ENCODE measurements at regions of chr15 and their contacts with region 1.

Region 1: DNA sequence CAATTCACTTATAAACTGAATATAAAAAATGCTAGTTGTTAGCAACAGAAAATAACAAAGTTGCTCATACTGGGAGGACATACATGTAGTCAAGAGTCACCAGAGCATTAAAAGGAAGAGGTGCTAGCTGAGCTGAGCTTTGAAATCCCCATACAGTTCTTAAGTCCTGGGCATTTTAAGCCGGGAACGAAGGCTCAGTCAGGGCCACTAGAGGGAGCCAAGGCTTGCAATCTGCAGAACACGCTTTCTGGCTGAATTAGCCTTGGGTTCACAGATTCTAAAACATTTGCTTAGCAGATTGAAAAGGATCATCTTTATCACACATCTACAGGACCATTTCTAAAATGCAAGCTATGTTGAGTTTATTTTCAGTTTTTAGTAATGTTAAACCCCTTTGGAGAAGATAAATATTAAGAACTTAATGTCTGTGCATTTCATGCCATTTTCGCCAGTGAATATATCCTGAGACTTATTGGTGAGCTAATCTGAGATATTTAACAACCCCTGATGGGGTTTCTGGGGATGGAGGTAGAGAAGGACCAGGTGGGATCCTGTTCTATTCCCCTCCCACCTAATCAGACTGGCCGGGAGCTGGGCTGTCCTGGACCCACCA is 26.3 kb upstream of the MNS1 start:
- DNase-seq: no peak
- H3K4me3 ChIP-seq: no peak overlapping the region
- H3K27ac ChIP-seq: no peak overlapping the region
- H3K4me1 ChIP-seq: no peaks in the 10 kb centered on the region
- H3K27me3 ChIP-seq: no peaks in the 10 kb centered on the region
- CTCF ChIP-seq: peak; percentile 76 to 93 (median 77)
- EP300 ChIP-seq: no peak
- POLR2A ChIP-seq: no peak

Region 2: GRCh38 chr15:56327701-56328452 is 163.3 kb before region 1 on chr15:
- intact Hi-C with region 1: no loop called
- DNase-seq: no peak
- H3K4me3 ChIP-seq: no peak overlapping the region
- H3K27ac ChIP-seq: no peak overlapping the region
- H3K4me1 ChIP-seq: no peaks in the 10 kb centered on the region
- H3K27me3 ChIP-seq: no peaks in the 10 kb centered on the region
- CTCF ChIP-seq: no peak
- EP300 ChIP-seq: no peak
- POLR2A ChIP-seq: no peak

Region 3: GRCh38 chr15:56805466-56806146 is 314.4 kb after region 1 on chr15:
- intact Hi-C with region 1: loop called (anchors 10 kb)
- DNase-seq: no peak
- H3K4me3 ChIP-seq: peak overlapping the region; percentile 5 to 26 (median 21)
- H3K27ac ChIP-seq: peak overlapping the region in 1 of 4 donors; percentile 13
- H3K4me1 ChIP-seq: peaks cover 0 to 12% (median 6%) of the 10 kb centered on the region in 4 donors
- H3K27me3 ChIP-seq: no peaks in the 10 kb centered on the region
- CTCF ChIP-seq: no peak
- EP300 ChIP-seq: no peak
- POLR2A ChIP-seq: no peak

Region 4: DNA sequence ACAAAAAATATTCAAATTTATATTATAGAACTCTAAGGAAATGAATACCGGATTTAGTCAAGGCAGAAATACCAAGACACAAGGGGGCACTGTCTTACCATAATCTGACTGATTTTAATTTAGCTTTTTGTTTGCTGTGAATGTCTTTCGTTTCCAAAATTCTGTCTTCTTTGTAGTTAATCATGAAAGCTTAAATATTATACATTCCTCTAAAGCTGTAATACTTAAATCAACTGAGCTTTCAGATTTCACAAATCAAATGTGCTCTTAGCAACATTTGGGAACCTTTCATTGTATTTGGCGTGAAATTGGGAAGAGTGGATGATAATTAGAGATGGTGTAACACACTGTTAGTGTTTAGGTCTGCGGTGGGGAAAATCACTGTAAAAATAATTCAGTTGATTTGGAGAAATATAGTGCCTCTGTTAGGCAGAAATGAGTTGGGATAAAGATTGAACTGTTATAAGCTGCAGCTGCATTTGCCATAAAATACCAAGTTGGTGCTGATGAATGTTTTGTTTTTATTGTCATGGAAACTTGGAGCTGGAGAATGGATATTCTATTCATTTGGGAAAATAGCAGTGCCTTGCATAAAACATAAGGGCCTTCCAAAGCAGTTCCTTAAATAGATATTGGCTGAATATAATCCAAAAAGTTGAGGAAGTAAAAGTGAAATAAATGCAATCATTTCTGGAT is 655.4 kb after region 1 on chr15:
- intact Hi-C with region 1: loop called (anchors 5 kb)
- DNase-seq: no peak
- H3K4me3 ChIP-seq: peak overlapping the region; percentile 27 to 36 (median 36)
- H3K27ac ChIP-seq: peak overlapping the region; percentile 27 to 62 (median 50)
- H3K4me1 ChIP-seq: peaks cover 39 to 59% (median 54%) of the 10 kb centered on the region in 4 donors
- H3K27me3 ChIP-seq: no peaks in the 10 kb centered on the region
- CTCF ChIP-seq: peak; percentile 73 to 80 (median 76)
- EP300 ChIP-seq: no peak
- POLR2A ChIP-seq: no peak

Region 5: DNA sequence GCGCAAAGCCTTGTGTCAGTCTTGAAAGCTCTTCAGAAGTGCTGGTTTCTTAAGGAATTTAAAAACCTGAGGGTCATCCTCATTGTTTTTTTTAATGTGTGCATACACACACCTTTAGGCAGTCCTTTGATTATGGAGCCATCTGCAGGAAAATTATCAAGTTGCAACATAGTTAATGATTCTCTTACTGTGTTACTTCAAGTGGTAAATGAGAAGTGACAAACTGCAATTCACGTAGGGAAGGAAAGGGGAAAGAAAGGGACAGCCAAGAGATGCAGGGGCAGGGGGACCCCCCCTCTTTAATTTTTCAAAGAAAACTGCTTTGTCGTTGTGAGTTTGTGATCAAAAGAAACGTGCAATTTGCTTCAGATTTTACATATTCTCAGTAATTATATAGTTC is 722.6 kb after region 1 on chr15:
- intact Hi-C with region 1: loop called (anchors 10 kb)
- DNase-seq: no peak
- H3K4me3 ChIP-seq: no peak overlapping the region
- H3K27ac ChIP-seq: no peak overlapping the region
- H3K4me1 ChIP-seq: peaks cover 9 to 64% (median 56%) of the 10 kb centered on the region in 4 donors
- H3K27me3 ChIP-seq: no peaks in the 10 kb centered on the region
- CTCF ChIP-seq: peak; percentile 53 to 63 (median 57)
- EP300 ChIP-seq: no peak
- POLR2A ChIP-seq: no peak

Region 6: GRCh38 chr15:57306161-57306943 is 815.1 kb after region 1 on chr15:
- intact Hi-C with region 1: loop called (anchors 5 kb)
- DNase-seq: peak; percentile 97
- H3K4me3 ChIP-seq: peak overlapping the region; percentile 52 to 69 (median 64)
- H3K27ac ChIP-seq: peak overlapping the region in 2 of 4 donors; percentile 2 to 43
- H3K4me1 ChIP-seq: peaks cover 6 to 21% (median 16%) of the 10 kb centered on the region in 4 donors
- H3K27me3 ChIP-seq: no peaks in the 10 kb centered on the region
- CTCF ChIP-seq: peak; percentile 76 to 90 (median 85)
- EP300 ChIP-seq: no peak
- POLR2A ChIP-seq: no peak

Measured in esophagus muscularis mucosa (tissue), 4 donors.